PC-9 (cell line): ENCODE measurements at regions of chr13 and their contacts with region 1.

Region 1: GRCh38 chr13:24671386-24672107 is 8.7 kb upstream of the ATP12A start:
- DNase-seq: peak; percentile 62 to 95
- H3K4me3 ChIP-seq: peak overlapping the region; percentile 49; the same call in 1 of the 2 replicates
- H3K27ac ChIP-seq: peak overlapping the region; percentile 88
- H3K4me1 ChIP-seq: peaks cover 45% of the 10 kb centered on the region
- H3K27me3 ChIP-seq: no peaks in the 10 kb centered on the region
- CTCF ChIP-seq: peak; percentile 82

Region 2: GRCh38 chr13:24512197-24512907 is 159.2 kb before region 1 on chr13 and contains the start of gene PARP4:
- CTCF ChIA-PET with region 1: no interaction called
- POLR2A ChIA-PET with region 1: no interaction called
- intact Hi-C with region 1: loop called (anchors 1 kb)
- DNase-seq: peak; percentile 77 to 97
- H3K4me3 ChIP-seq: peak within 1 kb of the TSS; percentile 77
- H3K27ac ChIP-seq: peak within 1 kb of the TSS; percentile 99
- H3K4me1 ChIP-seq: peaks cover 40% of the 10 kb centered on the region
- H3K27me3 ChIP-seq: no peaks in the 10 kb centered on the region
- CTCF ChIP-seq: no peak
- total RNA-seq, gene PARP4: 54.8 and 80.6 TPM in 2 replicates

Region 3: GRCh38 chr13:24605923-24606372 is 65.6 kb before region 1 on chr13:
- CTCF ChIA-PET with region 1: interaction called, 12 read pairs
- POLR2A ChIA-PET with region 1: interaction called, 4 read pairs
- intact Hi-C with region 1: loop called (anchors 1 kb)
- DNase-seq: peak; percentile 12 to 65
- H3K4me3 ChIP-seq: no peak overlapping the region
- H3K27ac ChIP-seq: no peak overlapping the region
- H3K4me1 ChIP-seq: no peaks in the 10 kb centered on the region
- H3K27me3 ChIP-seq: no peaks in the 10 kb centered on the region
- CTCF ChIP-seq: peak; percentile 68

Region 4: GRCh38 chr13:24627099-24627714 is 44.3 kb before region 1 on chr13:
- CTCF ChIA-PET with region 1: no interaction called
- POLR2A ChIA-PET with region 1: no interaction called
- intact Hi-C with region 1: loop called (anchors 1 kb)
- DNase-seq: peak in 1 of 2 experiments; percentile 45
- H3K4me3 ChIP-seq: no peak overlapping the region
- H3K27ac ChIP-seq: no peak overlapping the region
- H3K4me1 ChIP-seq: peaks cover 10% of the 10 kb centered on the region
- H3K27me3 ChIP-seq: no peaks in the 10 kb centered on the region
- CTCF ChIP-seq: peak; percentile 71